ENCODE measurements at regions of chr16 and their contacts with region 1.

Region 1: DNA sequence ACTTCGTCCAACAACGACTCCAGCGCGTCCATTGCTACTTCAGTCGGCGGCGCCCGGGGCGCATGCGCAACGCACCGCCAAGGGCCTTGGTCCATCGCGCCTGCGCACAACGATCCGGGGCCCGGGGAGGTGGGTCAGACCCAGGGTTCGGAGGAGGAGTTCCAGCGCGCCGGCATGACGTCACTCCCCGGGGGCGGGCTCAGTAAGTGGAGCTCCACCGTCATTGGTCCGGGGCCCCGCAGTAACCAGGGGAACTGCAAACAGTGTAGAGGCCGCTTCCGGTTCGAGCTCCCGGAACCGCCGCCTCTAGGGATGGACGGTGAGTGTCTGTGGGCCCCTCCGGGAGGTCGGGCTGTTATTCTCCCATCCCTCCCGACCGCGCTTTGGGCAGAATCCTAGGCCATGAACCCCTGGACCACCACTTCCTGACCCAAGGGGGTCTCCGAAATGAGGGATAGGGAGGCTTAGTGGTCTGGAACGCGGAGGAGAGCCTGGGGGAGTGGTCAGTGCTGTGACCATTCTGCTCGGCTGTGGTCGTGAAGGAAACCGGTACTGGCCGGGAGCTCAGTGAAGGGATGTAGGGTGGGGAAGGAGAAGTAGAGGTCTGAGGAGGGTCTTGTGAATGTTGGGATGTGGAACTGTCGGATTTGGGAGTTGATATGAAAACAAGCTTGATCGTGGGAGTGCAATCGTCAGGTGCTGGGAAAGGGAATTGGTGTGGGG is at the starts of genes GTF3C1 and KATNIP:
- DNase-seq: peak; percentile 99
- H3K4me3 Mint-ChIP-seq: peak within 1 kb of the TSS; percentile 100
- H3K27ac Mint-ChIP-seq: peak within 1 kb of the TSS; percentile 100
- H3K4me1 Mint-ChIP-seq: peaks cover 39% of the 10 kb centered on the region
- H3K27me3 Mint-ChIP-seq: no peaks in the 10 kb centered on the region
- CTCF ChIP-seq: no peak
- total RNA-seq, gene GTF3C1: 38.1 and 52.3 TPM in 2 replicates
- total RNA-seq, gene KATNIP: 21.3 and 36.5 TPM in 2 replicates

Region 2: DNA sequence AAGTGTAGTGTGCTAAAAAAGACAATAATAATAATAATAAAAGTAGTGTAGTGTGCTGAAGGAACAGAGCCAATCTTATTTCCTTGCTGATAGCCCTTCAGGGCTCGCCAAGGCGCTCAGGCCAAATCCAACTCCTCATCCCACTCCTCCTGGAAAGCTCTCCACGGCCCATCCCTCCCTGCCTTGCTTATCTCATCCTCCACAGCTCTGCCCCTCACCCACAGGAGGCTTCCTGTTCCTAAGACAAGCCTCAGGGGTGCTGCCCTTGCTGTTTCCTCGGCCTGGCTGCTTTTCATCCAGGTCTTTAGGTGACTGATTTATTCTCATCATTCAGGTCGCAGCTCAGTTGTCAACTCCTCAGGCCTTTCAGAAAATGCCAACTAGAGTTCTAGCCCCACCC is 11.5 kb before region 1 on chr16:
- CTCF ChIA-PET with region 1: interaction called, 3 read pairs
- POLR2A ChIA-PET with region 1: interaction called, 10 read pairs
- intact Hi-C with region 1: no loop called
- DNase-seq: no peak
- H3K4me3 Mint-ChIP-seq: no peak overlapping the region
- H3K27ac Mint-ChIP-seq: peak overlapping the region; percentile 22
- H3K4me1 Mint-ChIP-seq: no peaks in the 10 kb centered on the region
- H3K27me3 Mint-ChIP-seq: no peaks in the 10 kb centered on the region
- CTCF ChIP-seq: no peak

Region 3: GRCh38 chr16:27572711-27573110 is 22.7 kb after region 1 on chr16:
- CTCF ChIA-PET with region 1: interaction called, 4 read pairs
- POLR2A ChIA-PET with region 1: interaction called, 40 read pairs
- intact Hi-C with region 1: no loop called
- DNase-seq: no peak
- H3K4me3 Mint-ChIP-seq: no peak overlapping the region
- H3K27ac Mint-ChIP-seq: peak overlapping the region; percentile 35
- H3K4me1 Mint-ChIP-seq: peaks cover 15% of the 10 kb centered on the region
- H3K27me3 Mint-ChIP-seq: no peaks in the 10 kb centered on the region
- CTCF ChIP-seq: no peak

Region 4: GRCh38 chr16:27579087-27579980 is 29.3 kb after region 1 on chr16:
- CTCF ChIA-PET with region 1: interaction called, 6 read pairs
- POLR2A ChIA-PET with region 1: interaction called, 40 read pairs
- intact Hi-C with region 1: loop called (anchors 1 kb)
- DNase-seq: no peak
- H3K4me3 Mint-ChIP-seq: no peak overlapping the region
- H3K27ac Mint-ChIP-seq: no peak overlapping the region
- H3K4me1 Mint-ChIP-seq: peaks cover 23% of the 10 kb centered on the region
- H3K27me3 Mint-ChIP-seq: no peaks in the 10 kb centered on the region
- CTCF ChIP-seq: no peak